Activated CD4-positive, alpha-beta memory T cell treated with anti-CD3 and anti-CD28 coated beads for 36 hours (primary cell): ENCODE measurements at regions of chr17 and their contacts with region 1.

Region 1: GRCh38 chr17:45277216-45277849 is 15.4 kb upstream of the SPATA32 start:
- DNase-seq: peak; percentile 93
- H3K4me3 Mint-ChIP-seq: no peak overlapping the region
- H3K27ac Mint-ChIP-seq: peak overlapping the region; percentile 74
- H3K4me1 Mint-ChIP-seq: peaks cover 16% of the 10 kb centered on the region
- H3K27me3 Mint-ChIP-seq: no peaks in the 10 kb centered on the region

Region 2: DNA sequence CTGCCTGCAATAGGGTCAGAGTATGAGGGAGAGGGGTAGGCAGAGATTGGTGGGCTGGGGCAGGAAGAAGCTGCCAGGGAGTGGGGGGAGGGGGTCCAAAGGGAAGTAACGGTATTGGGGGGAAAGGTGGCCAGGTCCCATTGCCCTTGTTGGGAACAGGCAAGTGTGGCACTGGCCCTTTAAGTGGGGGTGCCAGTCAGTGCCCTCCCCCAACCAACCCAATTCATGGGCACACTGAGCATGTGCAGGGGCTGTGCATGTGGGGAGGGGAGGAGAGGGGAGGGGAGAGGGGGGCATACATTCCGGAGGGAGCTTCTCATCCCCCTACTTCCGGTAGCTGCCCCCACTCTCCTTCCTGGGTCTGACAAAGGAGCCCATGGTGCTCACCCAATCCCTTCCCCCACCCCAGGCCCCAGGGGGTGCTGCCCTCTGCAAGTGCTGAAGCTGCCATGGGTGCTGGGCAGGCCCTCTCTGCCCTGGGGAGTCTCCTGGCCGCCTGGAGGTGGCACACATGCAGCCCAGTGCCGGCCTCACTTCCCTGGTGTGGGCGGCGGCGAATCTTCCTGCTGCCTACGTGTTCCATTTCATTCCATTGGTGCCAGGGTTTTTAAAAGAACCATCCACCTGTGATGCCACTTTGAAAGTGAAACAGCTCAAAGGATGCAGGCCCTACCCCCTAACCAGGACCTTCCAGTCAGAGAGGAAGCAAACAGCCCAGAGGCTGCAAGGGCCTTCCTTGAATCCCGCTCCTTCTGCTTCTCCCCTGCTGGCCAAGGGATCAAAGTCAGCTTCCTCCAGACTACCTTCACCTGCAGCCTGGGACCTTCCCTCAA is 104.7 kb before region 1 on chr17:
- CTCF ChIA-PET with region 1: no interaction called
- POLR2A ChIA-PET with region 1: no interaction called
- intact Hi-C with region 1: no loop called
- DNase-seq: peak; percentile 68
- H3K4me3 Mint-ChIP-seq: peak overlapping the region; percentile 54
- H3K27ac Mint-ChIP-seq: peak overlapping the region; percentile 82
- H3K4me1 Mint-ChIP-seq: peaks cover 11% of the 10 kb centered on the region
- H3K27me3 Mint-ChIP-seq: no peaks in the 10 kb centered on the region

Region 3: GRCh38 chr17:45235416-45236281 is 41.7 kb before region 1 on chr17:
- CTCF ChIA-PET with region 1: interaction called, 17 read pairs
- POLR2A ChIA-PET with region 1: no interaction called
- intact Hi-C with region 1: no loop called
- DNase-seq: peak; percentile 83
- H3K4me3 Mint-ChIP-seq: no peak overlapping the region
- H3K27ac Mint-ChIP-seq: peak overlapping the region; percentile 73
- H3K4me1 Mint-ChIP-seq: peaks cover 63% of the 10 kb centered on the region
- H3K27me3 Mint-ChIP-seq: no peaks in the 10 kb centered on the region

Region 4: GRCh38 chr17:45261577-45262515 is 15.5 kb before region 1 on chr17 and contains the start of gene SPATA32:
- CTCF ChIA-PET with region 1: interaction called, 13 read pairs
- POLR2A ChIA-PET with region 1: no interaction called
- intact Hi-C with region 1: no loop called
- DNase-seq: peak; percentile 79
- H3K4me3 Mint-ChIP-seq: peak within 1 kb of the TSS; percentile 69
- H3K27ac Mint-ChIP-seq: peak within 1 kb of the TSS; percentile 67
- H3K4me1 Mint-ChIP-seq: peaks cover 21% of the 10 kb centered on the region
- H3K27me3 Mint-ChIP-seq: no peaks in the 10 kb centered on the region
- total RNA-seq, gene SPATA32: 0.12 TPM in 1 of 2 experiments, not detected in the other

Region 5: DNA sequence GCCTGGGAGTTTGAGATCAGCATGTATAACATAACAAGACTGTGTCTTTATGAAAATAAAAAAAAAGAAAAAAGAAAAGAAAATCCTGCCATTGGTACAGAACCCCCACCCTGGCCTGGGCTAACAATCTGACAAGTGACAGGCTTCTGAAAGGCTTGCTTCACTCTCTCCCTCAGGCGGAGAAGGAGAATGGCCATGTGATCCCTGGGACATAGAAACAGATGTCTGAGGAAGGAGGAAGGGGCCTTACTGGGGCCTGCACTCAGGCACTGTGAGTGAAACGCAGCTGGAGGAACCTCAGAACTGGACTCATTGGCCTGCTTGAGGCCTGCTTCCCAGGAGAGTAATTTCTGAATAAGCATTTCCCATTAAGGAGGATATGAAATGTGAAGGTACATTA is 22.0 kb after region 1 on chr17:
- CTCF ChIA-PET with region 1: interaction called, 36 read pairs
- POLR2A ChIA-PET with region 1: interaction called, 3 read pairs
- intact Hi-C with region 1: no loop called
- DNase-seq: no peak
- H3K4me3 Mint-ChIP-seq: no peak overlapping the region
- H3K27ac Mint-ChIP-seq: peak overlapping the region; percentile 61
- H3K4me1 Mint-ChIP-seq: peaks cover 85% of the 10 kb centered on the region
- H3K27me3 Mint-ChIP-seq: no peaks in the 10 kb centered on the region

Region 6: DNA sequence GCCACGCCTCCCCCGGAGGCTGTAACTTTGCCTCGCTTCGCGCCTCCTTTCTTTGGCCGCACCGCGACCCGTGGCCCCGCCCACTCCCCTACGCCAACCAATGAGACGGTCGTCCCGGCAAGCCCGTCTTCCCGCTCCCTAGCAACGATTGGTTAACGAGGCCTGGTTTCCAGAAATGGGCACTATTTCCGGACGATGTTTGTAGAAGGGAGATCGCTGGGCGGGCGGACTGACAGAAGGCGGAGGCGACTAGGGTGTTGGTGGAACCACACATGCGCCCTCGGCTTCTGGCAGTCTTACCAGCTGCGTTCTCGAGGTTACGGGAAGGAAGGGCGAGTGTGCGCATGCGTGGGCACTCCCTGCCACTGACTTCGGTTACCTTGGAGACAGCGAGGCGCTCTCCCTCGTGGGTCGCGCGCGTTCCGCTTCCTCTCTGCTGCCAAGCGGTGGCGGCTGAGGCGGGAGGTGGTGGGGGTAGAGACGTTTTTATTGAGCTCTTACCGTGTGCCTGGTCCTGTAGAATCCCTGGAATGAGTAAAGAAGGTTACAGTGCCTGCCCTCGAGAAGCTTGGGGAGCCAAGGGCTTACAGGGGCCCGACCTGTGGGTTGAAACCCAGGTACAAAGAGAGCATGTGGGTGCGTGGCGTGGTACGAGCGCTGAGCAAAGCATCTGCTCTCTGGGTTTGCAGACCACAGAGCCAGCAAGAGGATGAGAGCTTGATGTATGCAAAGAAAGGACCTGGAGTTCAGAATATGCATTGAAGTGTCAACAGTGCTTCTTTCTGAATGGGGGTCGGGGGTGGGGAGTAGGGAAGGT is 40.0 kb after region 1 on chr17:
- CTCF ChIA-PET with region 1: interaction called, 33 read pairs
- POLR2A ChIA-PET with region 1: interaction called, 9 read pairs
- intact Hi-C with region 1: loop called (anchors 5 kb)
- DNase-seq: peak; percentile 100
- H3K4me3 Mint-ChIP-seq: peak overlapping the region; percentile 81
- H3K27ac Mint-ChIP-seq: peak overlapping the region; percentile 89
- H3K4me1 Mint-ChIP-seq: peaks cover 65% of the 10 kb centered on the region
- H3K27me3 Mint-ChIP-seq: no peaks in the 10 kb centered on the region